B cell (primary cell): ENCODE measurements at regions of chr17 and their contacts with region 1.

Region 1: DNA sequence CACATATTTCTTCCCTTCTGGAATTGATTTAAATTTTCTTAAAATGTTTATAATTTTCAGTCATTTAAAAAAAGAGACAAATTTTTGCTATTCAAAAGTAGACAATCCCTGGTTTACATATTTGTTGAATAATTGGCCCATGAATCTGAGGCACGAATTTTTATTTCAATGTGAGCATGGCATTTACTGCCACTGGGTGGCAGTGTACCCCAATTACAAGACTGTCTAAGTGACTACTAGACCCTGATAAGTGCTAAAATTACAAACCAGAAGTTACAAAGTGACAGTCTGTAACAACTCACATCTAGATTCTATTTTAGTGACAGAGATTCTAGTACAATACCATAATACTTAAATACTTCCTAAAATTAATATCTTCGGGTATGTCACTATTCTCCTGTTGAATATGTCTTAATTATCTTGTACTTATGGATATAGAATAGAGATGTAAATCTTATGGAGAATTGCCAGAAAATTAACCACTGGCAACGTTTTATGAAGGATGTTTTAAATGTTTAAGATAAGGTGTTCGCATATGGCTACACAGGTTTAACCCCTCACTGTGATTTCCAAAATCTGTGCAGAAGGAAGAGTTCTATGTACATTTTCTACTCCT is 235.8 kb downstream of the MAP2K4 start:
- DNase-seq: peak; percentile 37
- ATAC-seq: peak; percentile 51
- H3K4me3 ChIP-seq: no peak overlapping the region
- H3K4me3 Mint-ChIP-seq: no peak overlapping the region
- H3K27ac ChIP-seq: no peak overlapping the region
- H3K27ac Mint-ChIP-seq: no peak overlapping the region
- H3K4me1 ChIP-seq: no peaks in the 10 kb centered on the region
- H3K4me1 Mint-ChIP-seq: no peaks in the 10 kb centered on the region
- H3K27me3 ChIP-seq: no peaks in the 10 kb centered on the region
- H3K27me3 Mint-ChIP-seq: peaks cover 3% of the 10 kb centered on the region
- CTCF ChIP-seq: peak; percentile 73

Region 2: GRCh38 chr17:11240041-11240801 is 1016.3 kb before region 1 on chr17:
- CTCF ChIA-PET with region 1: no interaction called
- POLR2A ChIA-PET with region 1: no interaction called
- intact Hi-C with region 1: no loop called
- DNase-seq: no peak
- ATAC-seq: no peak
- H3K4me3 ChIP-seq: no peak overlapping the region
- H3K4me3 Mint-ChIP-seq: no peak overlapping the region
- H3K27ac ChIP-seq: no peak overlapping the region
- H3K27ac Mint-ChIP-seq: no peak overlapping the region
- H3K4me1 ChIP-seq: no peaks in the 10 kb centered on the region
- H3K4me1 Mint-ChIP-seq: no peaks in the 10 kb centered on the region
- H3K27me3 ChIP-seq: peaks cover 0 to 22% (median 1%) of the 10 kb centered on the region in 4 experiments
- H3K27me3 Mint-ChIP-seq: peaks cover 37% of the 10 kb centered on the region
- CTCF ChIP-seq: no peak

Region 3: DNA sequence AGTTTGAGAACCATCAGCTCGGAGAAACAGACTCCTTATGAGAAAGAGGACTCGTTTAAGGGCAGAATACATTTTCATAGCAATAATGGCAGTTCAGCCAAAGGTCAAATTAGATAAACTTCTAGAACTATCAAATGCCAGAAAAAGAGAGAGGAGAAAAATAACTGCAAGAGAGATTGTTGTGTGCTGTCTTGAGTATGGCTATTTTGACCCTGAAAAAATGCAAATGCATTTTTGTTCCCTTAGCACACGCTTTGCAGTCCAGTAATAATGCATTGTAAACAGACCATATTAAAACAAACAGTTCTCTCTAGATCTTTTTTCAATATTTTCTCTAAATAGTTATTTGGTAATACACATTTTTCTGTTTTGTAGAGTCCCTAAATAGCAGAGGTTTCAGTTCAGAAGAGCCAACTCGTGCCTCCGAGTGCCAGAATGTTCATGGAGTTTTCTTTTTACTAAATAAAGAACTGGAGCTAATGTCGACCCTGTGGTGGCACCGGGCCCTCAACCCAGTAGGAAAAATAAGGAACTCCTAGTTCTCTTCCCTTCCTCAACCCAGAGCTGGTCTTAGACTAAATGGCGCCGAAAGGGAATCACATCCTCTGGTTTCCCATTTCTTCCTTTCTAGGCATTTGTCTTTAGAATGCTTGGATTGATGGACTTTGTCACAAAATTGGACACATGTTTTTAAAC is 62.2 kb after region 1 on chr17:
- CTCF ChIA-PET with region 1: no interaction called
- POLR2A ChIA-PET with region 1: no interaction called
- intact Hi-C with region 1: loop called (anchors 10 kb)
- DNase-seq: no peak
- ATAC-seq: no peak
- H3K4me3 ChIP-seq: no peak overlapping the region
- H3K4me3 Mint-ChIP-seq: no peak overlapping the region
- H3K27ac ChIP-seq: no peak overlapping the region
- H3K27ac Mint-ChIP-seq: no peak overlapping the region
- H3K4me1 ChIP-seq: no peaks in the 10 kb centered on the region
- H3K4me1 Mint-ChIP-seq: no peaks in the 10 kb centered on the region
- H3K27me3 ChIP-seq: no peaks in the 10 kb centered on the region
- H3K27me3 Mint-ChIP-seq: no peaks in the 10 kb centered on the region
- CTCF ChIP-seq: no peak

Region 4: GRCh38 chr17:12743046-12743445 is 486.6 kb after region 1 on chr17:
- CTCF ChIA-PET with region 1: interaction called, 18 read pairs
- POLR2A ChIA-PET with region 1: no interaction called
- intact Hi-C with region 1: no loop called
- DNase-seq: no peak
- ATAC-seq: no peak
- H3K4me3 ChIP-seq: no peak overlapping the region
- H3K4me3 Mint-ChIP-seq: no peak overlapping the region
- H3K27ac ChIP-seq: no peak overlapping the region
- H3K27ac Mint-ChIP-seq: no peak overlapping the region
- H3K4me1 ChIP-seq: no peaks in the 10 kb centered on the region
- H3K4me1 Mint-ChIP-seq: no peaks in the 10 kb centered on the region
- H3K27me3 ChIP-seq: no peaks in the 10 kb centered on the region
- H3K27me3 Mint-ChIP-seq: peaks cover 5% of the 10 kb centered on the region
- CTCF ChIP-seq: no peak

Region 5: GRCh38 chr17:12900474-12900873 is 644.0 kb after region 1 on chr17:
- CTCF ChIA-PET with region 1: no interaction called
- POLR2A ChIA-PET with region 1: no interaction called
- intact Hi-C with region 1: no loop called
- DNase-seq: no peak
- ATAC-seq: no peak
- H3K4me3 ChIP-seq: no peak overlapping the region
- H3K4me3 Mint-ChIP-seq: no peak overlapping the region
- H3K27ac ChIP-seq: no peak overlapping the region
- H3K27ac Mint-ChIP-seq: no peak overlapping the region
- H3K4me1 ChIP-seq: no peaks in the 10 kb centered on the region
- H3K4me1 Mint-ChIP-seq: no peaks in the 10 kb centered on the region
- H3K27me3 ChIP-seq: no peaks in the 10 kb centered on the region
- H3K27me3 Mint-ChIP-seq: no peaks in the 10 kb centered on the region
- CTCF ChIP-seq: no peak